Psoas muscle (tissue), 8 donors: ENCODE measurements at regions of chr9 and their contacts with region 1.

Region 1: DNA sequence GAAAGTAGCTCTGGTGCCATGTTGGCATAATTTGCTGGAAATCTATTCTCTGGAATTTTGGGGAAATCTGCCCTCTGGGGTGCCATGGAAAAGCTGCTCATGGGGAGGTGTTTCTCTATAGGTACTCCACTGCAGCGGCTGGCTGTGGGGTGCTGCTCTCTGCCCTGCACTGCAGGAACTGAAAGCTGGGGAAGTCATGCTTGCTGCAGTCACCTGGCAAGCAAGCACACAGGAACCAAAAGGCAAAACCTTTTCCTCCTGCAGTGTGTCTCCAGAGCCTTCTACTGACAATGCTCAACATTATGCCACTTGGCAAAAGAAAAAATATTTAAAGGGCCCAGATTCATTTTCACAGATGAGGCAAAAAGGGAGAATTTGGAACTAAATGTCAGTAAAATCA is 25.8 kb upstream of the CARNMT1 start:
- DNase-seq: no peak
- ATAC-seq: no peak
- H3K4me3 ChIP-seq: no peak overlapping the region
- H3K27ac ChIP-seq: no peak overlapping the region
- H3K4me1 ChIP-seq: no peaks in the 10 kb centered on the region
- H3K27me3 ChIP-seq: no peaks in the 10 kb centered on the region
- CTCF ChIP-seq: no peak

Region 2: DNA sequence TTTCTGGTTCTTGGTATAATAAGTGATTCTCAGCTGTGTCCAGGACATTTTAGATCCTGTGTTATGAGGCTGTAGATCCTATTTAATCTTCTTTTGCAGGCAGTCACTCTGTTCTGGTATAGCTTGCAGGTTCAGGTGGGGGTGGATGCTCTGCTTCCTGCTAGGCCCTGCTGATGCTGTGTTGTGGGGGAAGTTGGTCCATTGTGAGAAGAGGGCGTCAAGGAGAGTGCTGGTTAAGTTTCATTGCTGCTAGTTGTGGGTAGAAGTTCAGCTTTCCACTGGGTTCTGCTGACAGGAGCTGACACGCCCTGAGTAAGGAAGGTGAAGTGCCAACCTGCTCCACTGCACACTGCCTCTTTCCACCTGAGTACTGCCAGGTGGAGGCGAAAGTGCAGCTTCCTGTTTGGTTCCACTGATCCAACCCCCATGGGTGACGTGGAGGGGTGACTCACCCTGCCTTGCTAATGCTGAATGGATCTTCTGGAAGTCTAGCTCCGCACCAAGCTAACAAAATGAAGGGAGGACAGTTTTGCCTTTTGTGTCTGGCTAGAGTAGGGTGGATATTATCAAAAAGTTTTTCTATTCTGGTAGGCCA is 17.8 kb after region 1 on chr9:
- intact Hi-C with region 1: loop called in 1 of 2 experiments (anchors 1 kb)
- DNase-seq: no peak
- ATAC-seq: no peak
- H3K4me3 ChIP-seq: no peak overlapping the region
- H3K27ac ChIP-seq: no peak overlapping the region
- H3K4me1 ChIP-seq: no peaks in the 10 kb centered on the region
- H3K27me3 ChIP-seq: no peaks in the 10 kb centered on the region
- CTCF ChIP-seq: no peak